H1 (cell line): ENCODE measurements at regions of chr5 and their contacts with region 1.

Region 1: GRCh38 chr5:169569513-169569912 is 14.1 kb upstream of the SPDL1 start:
- DNase-seq: no peak
- H3K4me3 ChIP-seq: no peak overlapping the region
- H3K27ac ChIP-seq: no peak overlapping the region
- H3K4me1 ChIP-seq: no peaks in the 10 kb centered on the region
- H3K27me3 ChIP-seq: no peaks in the 10 kb centered on the region
- CTCF ChIP-seq: no peak
- EP300 ChIP-seq: no peak
- POLR2A ChIP-seq: no peak
- RAD21 ChIP-seq: no peak

Region 2: GRCh38 chr5:169581580-169582227 is 12.2 kb after region 1 on chr5:
- CTCF ChIA-PET with region 1: interaction called, 18 read pairs
- POLR2A ChIA-PET with region 1: interaction called, 8 read pairs
- DNase-seq: peak in 1 of 2 experiments; percentile 73
- H3K4me3 ChIP-seq: no peak overlapping the region
- H3K27ac ChIP-seq: no peak overlapping the region
- H3K4me1 ChIP-seq: no peaks in the 10 kb centered on the region
- H3K27me3 ChIP-seq: no peaks in the 10 kb centered on the region
- CTCF ChIP-seq: peak in 2 of 3 experiments; percentile 48 to 70; a peak in 2 of 4 replicates
- EP300 ChIP-seq: no peak
- POLR2A ChIP-seq: no peak
- RAD21 ChIP-seq: peak; percentile 73 to 74